Panc1 (cell line): ENCODE measurements at regions of chr5 and their contacts with region 1.

Region 1: DNA sequence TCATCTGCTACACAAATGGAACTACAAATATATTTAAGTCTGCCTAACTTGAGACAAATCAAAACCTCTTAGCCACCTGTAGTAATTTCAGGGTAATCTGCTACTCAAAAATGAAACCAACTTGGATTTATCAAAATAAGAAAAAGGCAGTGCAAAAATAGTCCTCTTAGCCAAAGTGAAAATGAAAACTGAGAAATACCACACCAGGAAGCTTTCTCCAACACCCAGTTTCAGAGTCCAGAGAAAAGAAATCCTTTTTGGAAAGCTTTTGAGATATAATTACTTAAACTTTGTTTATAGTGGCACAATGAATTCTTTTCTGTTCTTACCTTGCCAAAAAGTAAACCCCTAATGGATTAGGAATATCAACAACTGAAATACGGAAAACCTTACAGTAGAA is 990.4 kb downstream of the EFNA5 start:
- DNase-seq: no peak
- ATAC-seq: no peak
- H3K4me3 ChIP-seq: no peak overlapping the region
- H3K27ac ChIP-seq: no peak overlapping the region
- H3K4me1 ChIP-seq: no peaks in the 10 kb centered on the region
- H3K27me3 ChIP-seq: no peaks in the 10 kb centered on the region
- CTCF ChIP-seq: no peak

Region 2: GRCh38 chr5:106720367-106720766 is 40.0 kb after region 1 on chr5:
- CTCF ChIA-PET with region 1: no interaction called
- POLR2A ChIA-PET with region 1: no interaction called
- in situ Hi-C with region 1: no loop called
- intact Hi-C with region 1: no loop called
- DNase-seq: no peak
- ATAC-seq: no peak
- H3K4me3 ChIP-seq: no peak overlapping the region
- H3K27ac ChIP-seq: no peak overlapping the region
- H3K4me1 ChIP-seq: no peaks in the 10 kb centered on the region
- H3K27me3 ChIP-seq: no peaks in the 10 kb centered on the region
- CTCF ChIP-seq: no peak

Region 3: DNA sequence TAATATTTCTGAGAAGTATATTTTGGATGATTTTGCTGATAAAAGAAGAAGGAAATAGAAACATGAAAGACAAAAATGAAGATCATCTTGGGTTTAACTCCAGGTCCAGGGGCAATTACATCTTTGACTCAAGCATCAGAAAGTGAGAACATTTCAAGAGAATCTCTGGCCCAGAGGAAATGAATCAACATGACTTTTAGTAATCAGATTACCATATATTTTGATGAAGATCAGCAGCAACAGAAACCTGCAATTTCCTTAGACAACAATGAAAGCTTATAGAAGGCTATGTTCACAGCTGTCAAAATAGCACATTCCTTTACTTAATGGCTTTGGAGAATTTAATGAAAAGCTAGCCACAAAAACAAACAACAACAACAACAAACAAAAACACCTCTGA is 352.3 kb after region 1 on chr5:
- CTCF ChIA-PET with region 1: no interaction called
- POLR2A ChIA-PET with region 1: interaction called, 10 read pairs
- in situ Hi-C with region 1: no loop called
- intact Hi-C with region 1: no loop called
- DNase-seq: no peak
- ATAC-seq: no peak
- H3K4me3 ChIP-seq: no peak overlapping the region
- H3K27ac ChIP-seq: no peak overlapping the region
- H3K4me1 ChIP-seq: no peaks in the 10 kb centered on the region
- H3K27me3 ChIP-seq: no peaks in the 10 kb centered on the region
- CTCF ChIP-seq: no peak

Region 4: GRCh38 chr5:107352576-107352975 is 672.2 kb after region 1 on chr5:
- CTCF ChIA-PET with region 1: no interaction called
- POLR2A ChIA-PET with region 1: no interaction called
- in situ Hi-C with region 1: no loop called
- intact Hi-C with region 1: no loop called
- DNase-seq: no peak
- ATAC-seq: no peak
- H3K4me3 ChIP-seq: no peak overlapping the region
- H3K27ac ChIP-seq: no peak overlapping the region
- H3K4me1 ChIP-seq: no peaks in the 10 kb centered on the region
- H3K27me3 ChIP-seq: no peaks in the 10 kb centered on the region
- CTCF ChIP-seq: no peak